Sigmoid colon (tissue), 7 donors: ENCODE measurements at regions of chr1 and their contacts with region 1.

Region 1: GRCh38 chr1:40691538-40692428 is at the start of gene NFYC:
- DNase-seq: peak; percentile 99
- H3K4me3 ChIP-seq: peak within 1 kb of the TSS; percentile 78 to 96 (median 94)
- H3K27ac ChIP-seq: peak within 1 kb of the TSS; percentile 98 to 100 (median 99)
- H3K4me1 ChIP-seq: peaks cover 0 to 42% (median 20%) of the 10 kb centered on the region in 4 donors
- H3K27me3 ChIP-seq: no peaks in the 10 kb centered on the region
- CTCF ChIP-seq: peak in 1 of 4 experiments; percentile 20
- EP300 ChIP-seq: peak in 1 of 4 donors; percentile 44
- POLR2A ChIP-seq: peak; percentile 90 to 93
- total RNA-seq, gene NFYC: 38.0 to 53.5 (median 42.1) TPM

Region 2: GRCh38 chr1:40563266-40563665 is 128.5 kb before region 1 on chr1:
- intact Hi-C with region 1: no loop called
- DNase-seq: no peak
- H3K4me3 ChIP-seq: no peak overlapping the region
- H3K27ac ChIP-seq: no peak overlapping the region
- H3K4me1 ChIP-seq: no peaks in the 10 kb centered on the region
- H3K27me3 ChIP-seq: no peaks in the 10 kb centered on the region
- CTCF ChIP-seq: no peak
- EP300 ChIP-seq: no peak
- POLR2A ChIP-seq: no peak

Region 3: GRCh38 chr1:40709100-40709801 is 17.5 kb after region 1 on chr1:
- intact Hi-C with region 1: loop called (anchors 2 kb)
- DNase-seq: peak; percentile 91
- H3K4me3 ChIP-seq: peak overlapping the region; percentile 40 to 55 (median 49)
- H3K27ac ChIP-seq: peak overlapping the region; percentile 74 to 85 (median 78)
- H3K4me1 ChIP-seq: peaks cover 0 to 70% (median 59%) of the 10 kb centered on the region in 4 donors
- H3K27me3 ChIP-seq: no peaks in the 10 kb centered on the region
- CTCF ChIP-seq: no peak
- EP300 ChIP-seq: no peak
- POLR2A ChIP-seq: peak in 1 of 2 donors; percentile 85

Region 4: GRCh38 chr1:40783001-40783905 is 91.5 kb after region 1 on chr1 and contains the start of gene KCNQ4:
- intact Hi-C with region 1: loop called (anchors 5 kb)
- DNase-seq: peak; percentile 88
- H3K4me3 ChIP-seq: peak within 1 kb of the TSS; percentile 47 to 69 (median 57)
- H3K27ac ChIP-seq: peak within 1 kb of the TSS; percentile 78 to 93 (median 86)
- H3K4me1 ChIP-seq: peaks cover 3 to 58% (median 46%) of the 10 kb centered on the region in 4 donors
- H3K27me3 ChIP-seq: no peaks in the 10 kb centered on the region
- CTCF ChIP-seq: no peak
- EP300 ChIP-seq: no peak
- POLR2A ChIP-seq: no peak
- total RNA-seq, gene KCNQ4: 4.8 to 10.8 (median 8.7) TPM

Region 5: GRCh38 chr1:40951943-40952743 is 260.4 kb after region 1 on chr1:
- intact Hi-C with region 1: loop called (anchors 10 kb)
- DNase-seq: peak; percentile 87
- H3K4me3 ChIP-seq: no peak overlapping the region
- H3K27ac ChIP-seq: no peak overlapping the region
- H3K4me1 ChIP-seq: peaks cover 0 to 21% (median 15%) of the 10 kb centered on the region in 4 donors
- H3K27me3 ChIP-seq: no peaks in the 10 kb centered on the region
- CTCF ChIP-seq: peak; percentile 86 to 95 (median 90)
- EP300 ChIP-seq: no peak
- POLR2A ChIP-seq: no peak

Region 6: GRCh38 chr1:41030872-41031616 is 339.3 kb after region 1 on chr1:
- intact Hi-C with region 1: no loop called
- DNase-seq: no peak
- H3K4me3 ChIP-seq: no peak overlapping the region
- H3K27ac ChIP-seq: no peak overlapping the region
- H3K4me1 ChIP-seq: no peaks in the 10 kb centered on the region
- H3K27me3 ChIP-seq: no peaks in the 10 kb centered on the region
- CTCF ChIP-seq: no peak
- EP300 ChIP-seq: no peak
- POLR2A ChIP-seq: no peak